Body of pancreas (tissue), 4 donors: ENCODE measurements at regions of chr19 and their contacts with region 1.

Region 1: GRCh38 chr19:11781295-11782052 is 14.7 kb downstream of the ZNF441 start:
- DNase-seq: no peak
- ATAC-seq: no peak
- H3K4me3 ChIP-seq: no peak overlapping the region
- H3K27ac ChIP-seq: no peak overlapping the region
- H3K4me1 ChIP-seq: no peaks in the 10 kb centered on the region
- H3K27me3 ChIP-seq: no peaks in the 10 kb centered on the region
- CTCF ChIP-seq: no peak
- POLR2A ChIP-seq: no peak

Region 2: DNA sequence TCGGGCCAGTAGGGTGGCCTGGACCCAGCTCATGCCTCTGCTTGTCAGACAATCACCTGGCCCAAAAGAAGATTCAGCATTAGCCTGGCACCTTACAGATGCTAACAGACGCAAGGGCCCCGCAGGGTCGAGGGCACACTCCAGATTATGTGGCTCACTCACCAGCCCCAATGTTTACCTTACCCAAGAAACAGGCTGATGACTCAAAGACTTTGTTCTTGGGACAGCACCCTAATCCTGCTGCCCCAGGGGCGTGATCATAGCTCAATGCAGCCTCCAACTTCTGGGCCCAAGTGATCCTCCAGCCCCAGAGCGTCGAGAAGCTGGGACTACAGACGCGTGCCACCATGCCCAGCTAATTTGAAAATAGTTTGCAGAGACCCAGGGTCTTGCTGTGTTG is 262.3 kb before region 1 on chr19:
- intact Hi-C with region 1: no loop called
- DNase-seq: no peak
- ATAC-seq: no peak
- H3K4me3 ChIP-seq: no peak overlapping the region
- H3K27ac ChIP-seq: no peak overlapping the region
- H3K4me1 ChIP-seq: no peaks in the 10 kb centered on the region
- H3K27me3 ChIP-seq: no peaks in the 10 kb centered on the region
- CTCF ChIP-seq: no peak
- POLR2A ChIP-seq: no peak

Region 3: GRCh38 chr19:11843722-11844121 is 62.2 kb after region 1 on chr19:
- intact Hi-C with region 1: no loop called
- DNase-seq: no peak
- ATAC-seq: no peak
- H3K4me3 ChIP-seq: no peak overlapping the region
- H3K27ac ChIP-seq: no peak overlapping the region
- H3K4me1 ChIP-seq: peaks cover 5% of the 10 kb centered on the region
- H3K27me3 ChIP-seq: no peaks in the 10 kb centered on the region
- CTCF ChIP-seq: no peak
- POLR2A ChIP-seq: no peak

Region 4: DNA sequence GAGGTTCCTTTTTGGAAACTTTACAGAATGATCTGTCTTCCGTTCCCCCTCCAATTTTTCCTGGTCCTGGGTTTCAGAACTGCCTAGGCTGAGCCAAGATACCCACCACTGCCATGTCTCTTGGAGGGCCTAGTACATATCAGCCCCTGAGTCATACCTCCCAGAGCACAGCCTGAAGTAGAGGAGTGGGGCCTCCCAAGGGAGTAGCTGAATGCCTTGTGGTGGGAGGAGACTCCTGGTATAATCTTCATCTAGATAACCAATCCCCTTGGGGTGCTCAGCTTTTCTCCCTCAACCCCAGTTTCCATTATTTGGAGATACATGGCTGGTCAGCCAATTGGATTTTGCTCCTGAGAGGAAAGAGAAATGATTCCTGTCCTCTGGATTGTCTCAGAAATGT is 213.7 kb after region 1 on chr19:
- intact Hi-C with region 1: loop called (anchors 10 kb)
- DNase-seq: no peak
- ATAC-seq: no peak
- H3K4me3 ChIP-seq: no peak overlapping the region
- H3K27ac ChIP-seq: no peak overlapping the region
- H3K4me1 ChIP-seq: no peaks in the 10 kb centered on the region
- H3K27me3 ChIP-seq: no peaks in the 10 kb centered on the region
- CTCF ChIP-seq: no peak
- POLR2A ChIP-seq: no peak